Heart left ventricle (tissue), 16 donors: ENCODE measurements at regions of chr12 and their contacts with region 1.

Region 1: DNA sequence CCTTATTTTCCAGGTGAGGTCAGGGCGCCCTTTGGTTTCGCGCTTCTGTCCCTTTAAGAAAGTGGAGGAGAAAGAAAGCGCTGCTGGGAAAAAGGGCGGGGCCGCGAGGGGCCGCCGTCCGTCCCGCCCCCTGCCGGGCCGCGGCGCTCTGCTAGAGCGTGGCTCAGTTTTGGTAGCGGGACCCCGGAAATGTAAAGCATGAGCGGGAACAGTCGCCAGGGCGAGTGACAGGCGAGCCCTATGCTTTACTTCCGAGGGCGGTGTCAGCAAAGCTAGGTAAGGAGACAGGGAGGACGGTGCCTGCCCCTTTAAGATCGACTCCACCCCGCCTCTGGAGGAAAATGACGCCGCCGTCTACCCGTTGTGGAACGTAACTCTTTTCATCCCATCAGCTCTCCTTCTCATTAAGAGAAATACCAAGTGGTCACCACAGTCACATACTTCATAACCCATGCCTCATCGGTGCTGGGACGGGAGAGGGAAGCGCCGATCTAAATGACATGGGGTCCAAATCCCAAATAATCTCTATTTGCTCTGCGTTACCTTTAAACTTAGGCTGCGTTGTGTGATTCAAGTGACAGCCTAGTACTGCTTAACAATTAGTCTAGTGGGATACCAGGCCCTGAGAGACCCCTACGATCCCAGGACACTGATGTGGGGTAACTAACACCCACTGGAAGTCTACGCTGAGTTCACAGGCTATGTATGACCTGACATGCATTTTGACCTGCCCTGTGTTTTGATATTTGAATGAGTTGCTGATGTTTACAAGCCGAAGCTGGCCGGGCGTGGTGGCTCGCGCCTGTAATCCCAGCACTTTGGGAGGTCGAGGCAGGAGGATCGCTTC is at the start of gene ETFBKMT:
- DNase-seq: peak; percentile 86 to 91 (median 90)
- ATAC-seq: peak; percentile 88 to 96 (median 96)
- H3K4me3 ChIP-seq: peak within 1 kb of the TSS; percentile 28 to 92 (median 70)
- H3K27ac ChIP-seq: peak within 1 kb of the TSS; percentile 87 to 99 (median 93)
- H3K4me1 ChIP-seq: peaks cover 0 to 12% (median 6%) of the 10 kb centered on the region in 12 donors
- H3K27me3 ChIP-seq: no peaks in the 10 kb centered on the region
- CTCF ChIP-seq: peak in 11 of 12 donors; percentile 33 to 80 (median 46)
- POLR2A ChIP-seq: peak in 1 of 2 donors; percentile 32
- total RNA-seq, gene ETFBKMT: 3.1 to 7.4 (median 6.1) TPM

Region 2: DNA sequence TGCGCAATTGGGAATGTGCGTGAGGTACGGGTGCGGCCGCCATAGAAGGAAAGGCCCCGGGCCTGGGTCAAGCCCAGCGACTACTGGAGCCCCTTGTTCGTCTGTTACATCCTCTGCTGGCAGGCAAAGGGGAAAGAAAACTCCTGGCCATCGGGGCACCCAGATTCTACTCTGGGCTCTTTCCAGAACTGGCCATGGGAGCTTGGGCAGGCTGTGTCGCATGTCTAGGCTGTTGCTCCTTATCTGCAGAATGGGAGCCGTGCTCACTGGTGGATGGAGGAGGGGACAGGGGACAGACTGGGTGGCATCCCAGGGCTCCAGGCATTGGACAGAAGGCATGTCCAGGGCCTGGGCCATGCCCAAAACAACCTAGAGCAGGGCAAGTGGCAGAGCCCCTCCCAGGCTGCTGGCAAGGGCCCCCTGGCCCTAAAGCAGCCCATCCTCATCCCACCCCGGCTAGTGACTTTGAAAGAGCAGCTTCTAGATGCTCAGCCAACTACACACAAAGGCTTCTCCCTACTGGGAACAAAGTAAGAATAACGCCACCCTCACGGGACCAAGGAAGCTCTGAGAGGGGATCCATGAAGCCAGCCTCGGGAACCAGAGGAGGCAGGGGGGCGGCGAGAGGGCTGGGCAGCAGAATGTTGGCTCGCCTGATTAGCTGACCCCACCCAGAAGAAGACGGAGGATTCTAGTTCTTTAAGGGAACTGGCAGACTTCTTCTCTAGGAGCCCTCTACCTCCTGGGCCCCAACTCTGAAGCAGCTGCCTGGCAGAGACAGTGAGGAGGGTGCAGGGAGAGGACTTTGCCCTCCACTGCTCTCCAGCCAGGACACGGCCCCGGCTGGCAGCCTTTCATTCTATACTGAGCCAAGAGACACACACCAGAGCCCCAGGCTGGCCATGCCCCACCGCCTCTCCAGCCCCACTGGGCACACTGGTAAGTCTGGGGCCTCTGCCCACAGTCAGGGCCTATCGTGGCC is 430.2 kb before region 1 on chr12:
- intact Hi-C with region 1: no loop called
- DNase-seq: peak in 4 of 5 donors; percentile 42 to 79 (median 52)
- ATAC-seq: peak; percentile 86 to 91 (median 90)
- H3K4me3 ChIP-seq: no peak overlapping the region
- H3K27ac ChIP-seq: peak overlapping the region in 5 of 12 donors; percentile 18 to 65 (median 30)
- H3K4me1 ChIP-seq: peaks cover 0 to 8% (median 0%) of the 10 kb centered on the region in 12 donors
- H3K27me3 ChIP-seq: no peaks in the 10 kb centered on the region
- CTCF ChIP-seq: no peak
- POLR2A ChIP-seq: no peak

Region 3: DNA sequence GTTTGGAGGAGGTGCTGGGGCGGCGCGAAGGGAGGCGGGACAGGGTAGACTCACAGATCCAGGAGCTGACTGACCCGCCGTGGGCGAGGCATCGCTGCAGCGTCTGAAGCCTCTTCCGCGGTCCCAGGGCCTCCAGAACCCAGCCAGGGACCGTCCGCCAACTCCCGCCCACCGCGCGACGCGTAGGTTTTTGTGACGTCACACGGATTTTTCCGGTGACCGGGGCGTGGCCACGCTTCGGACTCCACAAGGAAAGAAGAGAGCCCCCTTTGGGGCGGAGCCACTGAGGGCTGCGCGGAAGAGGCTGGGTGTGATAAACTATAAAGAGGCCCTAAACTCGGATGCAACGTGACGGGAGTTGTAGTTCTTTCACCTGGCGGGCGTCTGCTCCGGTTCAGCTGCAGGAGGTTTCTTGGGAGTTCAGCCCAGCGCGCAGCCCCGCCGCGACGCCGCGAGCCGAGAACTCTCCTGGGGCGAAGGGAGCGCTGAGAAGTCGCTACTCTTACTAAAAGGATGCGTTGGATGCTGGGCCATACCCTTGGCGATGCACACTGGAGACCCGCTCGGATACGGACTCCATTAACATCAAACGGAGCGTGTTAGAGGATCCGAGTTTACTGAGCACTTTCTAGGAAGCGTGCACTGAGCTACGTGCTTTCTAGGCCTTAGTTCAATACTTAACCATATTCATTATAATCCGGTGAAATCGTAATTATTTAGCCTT is 69.8 kb after region 1 on chr12 and contains the start of gene AMN1:
- intact Hi-C with region 1: loop called in 3 of 10 experiments (anchors 5 kb)
- DNase-seq: peak; percentile 98 to 100 (median 99)
- ATAC-seq: peak; percentile 96 to 98 (median 98)
- H3K4me3 ChIP-seq: peak within 1 kb of the TSS; percentile 46 to 85 (median 63)
- H3K27ac ChIP-seq: peak within 1 kb of the TSS; percentile 92 to 98 (median 95)
- H3K4me1 ChIP-seq: peaks cover 0 to 83% (median 41%) of the 10 kb centered on the region in 12 donors
- H3K27me3 ChIP-seq: no peaks in the 10 kb centered on the region
- CTCF ChIP-seq: peak in 3 of 12 donors; percentile 14 to 35 (median 18)
- POLR2A ChIP-seq: peak in 1 of 2 donors; percentile 84
- total RNA-seq, gene AMN1: 8.5 to 22.5 (median 16.4) TPM

Region 4: DNA sequence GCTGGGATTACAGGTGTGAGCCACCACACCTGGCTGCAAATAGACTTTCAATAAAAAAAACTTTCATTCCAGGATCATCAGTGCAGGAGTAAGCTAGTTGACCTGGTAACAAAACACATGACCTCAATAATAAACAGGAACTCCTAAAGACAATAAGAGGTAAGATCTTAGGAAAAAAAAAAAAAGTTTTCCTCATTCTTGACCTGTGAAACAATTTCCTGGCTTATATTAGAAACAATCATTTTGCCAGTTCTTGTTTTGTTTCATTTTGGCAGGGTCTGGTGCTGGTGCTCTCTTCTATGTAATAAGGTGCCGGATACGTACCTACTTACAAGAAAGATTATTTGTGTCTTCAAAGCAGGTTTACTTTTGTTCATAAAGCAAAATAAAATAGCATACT is 160.1 kb after region 1 on chr12:
- intact Hi-C with region 1: no loop called
- DNase-seq: no peak
- ATAC-seq: peak in 1 of 4 donors; percentile 68
- H3K4me3 ChIP-seq: no peak overlapping the region
- H3K27ac ChIP-seq: peak overlapping the region in 5 of 12 donors; percentile 6 to 53 (median 44)
- H3K4me1 ChIP-seq: peaks cover 0 to 7% (median 0%) of the 10 kb centered on the region in 12 donors
- H3K27me3 ChIP-seq: no peaks in the 10 kb centered on the region
- CTCF ChIP-seq: no peak
- POLR2A ChIP-seq: no peak

Region 5: DNA sequence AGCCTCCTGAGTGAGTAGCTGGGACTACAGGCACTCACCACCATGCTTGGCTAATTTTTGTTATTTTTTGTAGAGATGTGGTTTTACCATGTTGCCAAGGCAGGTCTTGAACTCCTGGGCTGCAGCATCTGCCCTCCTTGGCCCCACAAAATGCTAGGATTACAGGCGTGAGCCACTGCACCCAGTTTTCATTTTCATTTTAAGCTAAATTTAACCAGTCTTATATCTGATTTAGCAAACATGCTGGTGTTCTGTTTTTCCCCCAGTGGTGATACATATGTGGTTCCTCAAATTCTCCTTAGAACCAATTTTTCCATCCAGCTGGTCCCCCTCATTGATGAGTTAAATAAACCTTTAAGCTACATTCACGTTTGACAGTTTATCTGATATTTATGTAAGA is 403.6 kb after region 1 on chr12:
- intact Hi-C with region 1: loop called in 3 of 10 experiments (anchors 5 to 10 kb)
- DNase-seq: no peak
- ATAC-seq: no peak
- H3K4me3 ChIP-seq: no peak overlapping the region
- H3K27ac ChIP-seq: no peak overlapping the region
- H3K4me1 ChIP-seq: peaks cover 0 to 4% (median 0%) of the 10 kb centered on the region in 12 donors
- H3K27me3 ChIP-seq: no peaks in the 10 kb centered on the region
- CTCF ChIP-seq: no peak
- POLR2A ChIP-seq: no peak

Region 6: DNA sequence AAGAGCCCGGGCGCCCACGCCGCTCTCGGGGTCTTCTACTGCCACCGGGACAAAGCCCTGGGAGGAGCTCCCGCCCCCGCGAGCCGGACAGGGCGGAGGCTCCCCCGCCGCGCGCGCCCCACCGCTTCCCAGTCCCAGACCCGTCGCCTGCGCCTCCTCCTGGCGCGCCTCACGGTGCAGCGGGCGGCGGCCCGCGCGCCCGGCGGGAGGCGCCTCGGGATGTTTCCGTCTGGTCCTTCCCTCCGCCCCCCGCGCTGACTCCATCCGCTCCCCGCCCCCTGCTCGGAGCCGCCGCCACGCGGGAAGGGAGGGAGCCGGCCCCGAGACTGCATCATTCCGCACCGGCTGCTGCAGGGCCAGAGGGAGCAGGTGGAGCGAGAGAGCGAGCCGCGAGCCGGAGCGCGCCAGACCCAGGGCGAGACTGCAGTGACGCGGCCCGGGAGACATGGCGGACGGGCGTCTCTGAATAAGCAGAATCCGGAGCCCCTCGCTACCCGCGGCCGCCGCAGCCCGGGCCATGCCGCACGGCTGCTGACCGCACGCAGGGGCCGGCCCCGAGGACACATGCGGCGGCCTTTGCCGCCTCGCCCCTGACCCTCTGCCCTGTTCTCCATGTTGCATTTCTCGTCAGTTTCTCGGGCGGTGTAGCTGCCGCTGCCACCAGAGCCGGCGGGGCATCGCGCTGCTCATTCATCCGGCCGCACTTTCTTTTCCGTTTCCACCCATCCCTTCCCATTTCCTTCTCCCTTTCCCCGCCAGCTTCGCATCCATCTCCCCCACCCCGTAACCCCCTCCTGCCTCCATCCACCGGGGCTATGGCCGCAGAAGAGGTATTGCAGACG is 447.4 kb after region 1 on chr12 and contains the start of gene BICD1:
- intact Hi-C with region 1: loop called in 1 of 10 experiments (anchors 5 kb)
- DNase-seq: peak; percentile 93 to 95 (median 93)
- ATAC-seq: peak; percentile 88 to 98 (median 98)
- H3K4me3 ChIP-seq: peak within 1 kb of the TSS; percentile 68 to 98 (median 89)
- H3K27ac ChIP-seq: peak within 1 kb of the TSS; percentile 63 to 96 (median 86)
- H3K4me1 ChIP-seq: peaks cover 0 to 50% (median 27%) of the 10 kb centered on the region in 12 donors
- H3K27me3 ChIP-seq: no peaks in the 10 kb centered on the region
- CTCF ChIP-seq: peak in 10 of 12 donors; percentile 13 to 75 (median 49)
- POLR2A ChIP-seq: peak in 1 of 2 donors; percentile 88
- total RNA-seq, gene BICD1: 2.1 to 16.3 (median 8.9) TPM

Region 7: GRCh38 chr12:32312049-32312670 is 652.9 kb after region 1 on chr12:
- intact Hi-C with region 1: loop called (anchors 5 to 10 kb)
- DNase-seq: no peak
- ATAC-seq: peak in 1 of 4 donors; percentile 22
- H3K4me3 ChIP-seq: no peak overlapping the region
- H3K27ac ChIP-seq: no peak overlapping the region
- H3K4me1 ChIP-seq: peaks cover 0 to 14% (median 5%) of the 10 kb centered on the region in 12 donors
- H3K27me3 ChIP-seq: no peaks in the 10 kb centered on the region
- CTCF ChIP-seq: peak; percentile 19 to 65 (median 52)
- POLR2A ChIP-seq: no peak